ENCODE measurements at regions of chr4 and their contacts with region 1.

Region 1: DNA sequence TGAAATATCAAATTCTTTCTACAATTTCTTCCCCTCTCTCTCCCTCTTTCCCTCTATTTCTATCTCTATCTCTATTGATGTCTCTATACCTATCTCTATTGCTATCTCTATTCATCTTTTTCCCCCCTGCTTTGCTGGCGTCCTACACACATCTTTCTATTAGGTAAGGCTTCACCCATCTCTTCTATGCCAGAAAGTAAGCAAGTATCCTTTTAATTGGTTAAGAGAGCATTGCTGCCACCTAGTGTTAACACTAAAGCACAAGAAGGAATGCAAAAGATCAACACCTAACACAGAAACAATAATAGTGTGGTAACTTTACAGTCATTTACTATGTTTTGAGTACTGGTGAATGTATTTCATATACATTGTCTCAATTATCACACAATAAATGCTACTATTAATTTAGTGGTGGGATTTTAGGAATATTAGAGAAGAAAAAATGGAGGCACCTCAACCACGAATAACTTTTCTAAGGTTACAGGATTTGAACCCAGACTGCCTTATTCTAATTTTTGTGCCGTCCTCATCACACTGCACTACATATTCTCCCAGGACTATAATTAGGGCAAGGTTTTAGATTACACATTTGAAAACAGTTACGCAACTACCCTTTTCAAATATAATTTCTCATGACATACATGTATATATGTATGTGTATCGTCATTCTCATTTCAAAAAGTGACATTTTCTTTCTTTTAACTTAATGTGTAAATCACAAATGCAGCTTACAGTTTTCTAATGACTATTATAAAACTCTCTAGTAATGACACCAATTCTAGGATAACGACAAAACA is 3.7 kb upstream of the C4orf36 start:
- DNase-seq: peak; percentile 61
- ATAC-seq: peak; percentile 31
- H3K4me3 ChIP-seq: no peak overlapping the region
- H3K27ac ChIP-seq: no peak overlapping the region
- H3K4me1 ChIP-seq: peaks cover 6 to 32% of the 10 kb centered on the region in 2 experiments
- H3K27me3 ChIP-seq: no peaks in the 10 kb centered on the region
- CTCF ChIP-seq: peak; percentile 64 to 90 (median 87)
- POLR2A ChIP-seq: no peak
- RAD21 ChIP-seq: peak; percentile 96

Region 2: GRCh38 chr4:86223472-86223871 is 672.4 kb before region 1 on chr4:
- CTCF ChIA-PET with region 1: no interaction called
- POLR2A ChIA-PET with region 1: no interaction called
- RAD21 ChIA-PET with region 1: no interaction called
- intact Hi-C with region 1: loop called (anchors 2 kb)
- DNase-seq: peak; percentile 66
- ATAC-seq: peak; percentile 99
- H3K4me3 ChIP-seq: no peak overlapping the region
- H3K27ac ChIP-seq: no peak overlapping the region
- H3K4me1 ChIP-seq: no peaks in the 10 kb centered on the region
- H3K27me3 ChIP-seq: no peaks in the 10 kb centered on the region
- CTCF ChIP-seq: peak; percentile 71 to 82 (median 81)
- POLR2A ChIP-seq: no peak
- RAD21 ChIP-seq: peak; percentile 62

Region 3: GRCh38 chr4:86522349-86522748 is 373.5 kb before region 1 on chr4:
- CTCF ChIA-PET with region 1: interaction called, 8 read pairs
- POLR2A ChIA-PET with region 1: interaction called, 3 read pairs
- RAD21 ChIA-PET with region 1: interaction called, 3 read pairs
- intact Hi-C with region 1: loop called (anchors 1 kb)
- DNase-seq: no peak
- ATAC-seq: no peak
- H3K4me3 ChIP-seq: no peak overlapping the region
- H3K27ac ChIP-seq: no peak overlapping the region
- H3K4me1 ChIP-seq: no peaks in the 10 kb centered on the region
- H3K27me3 ChIP-seq: no peaks in the 10 kb centered on the region
- CTCF ChIP-seq: peak in 2 of 3 experiments; percentile 22 to 49; a peak in 2 of 6 replicates
- POLR2A ChIP-seq: no peak
- RAD21 ChIP-seq: peak; percentile 64

Region 4: DNA sequence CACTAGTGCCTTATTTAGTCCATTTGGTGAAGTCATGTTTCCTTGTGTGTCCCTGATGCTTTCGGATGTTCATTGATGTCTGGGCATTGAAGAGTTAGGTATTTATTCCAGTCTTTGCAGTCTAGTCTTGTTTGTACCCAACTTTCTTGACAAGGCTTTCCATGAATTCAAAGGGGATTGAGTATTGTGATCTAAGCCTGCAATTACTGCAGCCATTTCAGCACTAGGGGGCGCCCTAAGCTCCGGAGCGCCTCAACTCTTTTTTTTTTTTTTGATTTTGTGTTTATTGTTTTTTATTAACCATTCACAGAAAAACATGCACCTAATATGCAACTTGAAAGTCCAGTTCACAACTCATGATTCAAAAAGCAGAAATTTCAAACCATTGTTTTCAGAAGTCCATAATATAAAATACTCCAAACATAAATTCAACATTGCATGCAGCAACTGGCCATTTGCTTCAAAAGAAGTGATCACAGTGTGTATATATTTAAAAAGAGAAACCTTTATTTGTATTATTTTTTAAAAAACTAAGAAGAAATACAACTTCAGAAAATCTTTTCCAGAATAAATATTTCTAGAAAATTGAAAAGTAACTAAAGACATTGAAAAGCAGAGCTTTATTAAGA is 242.5 kb before region 1 on chr4:
- CTCF ChIA-PET with region 1: no interaction called
- POLR2A ChIA-PET with region 1: no interaction called
- RAD21 ChIA-PET with region 1: no interaction called
- intact Hi-C with region 1: loop called (anchors 5 kb)
- DNase-seq: peak; percentile 6
- ATAC-seq: no peak
- H3K4me3 ChIP-seq: no peak overlapping the region
- H3K27ac ChIP-seq: no peak overlapping the region
- H3K4me1 ChIP-seq: no peaks in the 10 kb centered on the region
- H3K27me3 ChIP-seq: no peaks in the 10 kb centered on the region
- CTCF ChIP-seq: peak; percentile 22 to 63 (median 54); a peak in 4 of 6 replicates
- POLR2A ChIP-seq: no peak
- RAD21 ChIP-seq: peak; percentile 36; the same call in 1 of the 2 replicates

Region 5: GRCh38 chr4:87220094-87220822 is 324.4 kb after region 1 on chr4 and contains the start of gene KLHL8:
- CTCF ChIA-PET with region 1: no interaction called
- POLR2A ChIA-PET with region 1: no interaction called
- RAD21 ChIA-PET with region 1: no interaction called
- intact Hi-C with region 1: no loop called
- DNase-seq: peak; percentile 49
- ATAC-seq: peak; percentile 96
- H3K4me3 ChIP-seq: peak within 1 kb of the TSS; percentile 98 to 99
- H3K27ac ChIP-seq: peak within 1 kb of the TSS; percentile 91
- H3K4me1 ChIP-seq: peaks cover 2 to 17% of the 10 kb centered on the region in 2 experiments; a peak in 3 of 4 replicates
- H3K27me3 ChIP-seq: no peaks in the 10 kb centered on the region
- CTCF ChIP-seq: 0 out of 6 replicates have a peak, but pooled peaks of 1 of the 3 experiments have one; percentile 2
- POLR2A ChIP-seq: peak; percentile 94
- RAD21 ChIP-seq: no peak
- total RNA-seq, gene KLHL8: 24.2 TPM

Region 6: DNA sequence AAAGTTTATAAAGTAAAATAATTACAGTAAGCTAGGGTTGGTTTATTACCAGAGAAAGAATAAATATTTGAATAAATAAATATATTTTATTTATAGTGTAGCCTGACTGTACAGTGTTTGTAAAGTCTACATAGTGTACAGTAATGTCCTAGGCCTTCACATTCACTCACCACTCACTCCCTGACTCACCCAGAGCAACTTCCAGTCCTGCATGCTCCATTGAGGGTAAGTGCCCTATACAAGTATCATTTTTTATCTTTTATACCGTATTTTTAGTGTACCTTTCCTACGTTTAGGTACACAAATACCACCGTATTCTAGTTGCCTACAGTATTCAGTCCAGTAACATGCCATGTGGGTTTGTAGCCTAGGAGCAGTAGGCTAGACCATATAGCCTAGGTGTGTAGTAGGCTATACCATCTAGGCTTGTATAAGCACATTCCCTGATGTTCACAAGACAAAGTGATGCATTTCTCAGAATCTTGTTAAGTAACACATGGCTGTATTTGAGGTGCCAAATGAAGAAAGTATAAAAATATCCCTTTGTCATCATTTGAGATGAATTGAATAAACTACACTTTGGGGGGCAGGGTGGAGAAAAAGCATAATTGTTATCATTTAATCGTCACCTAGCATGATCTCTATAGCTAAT is 339.3 kb after region 1 on chr4:
- CTCF ChIA-PET with region 1: no interaction called
- POLR2A ChIA-PET with region 1: no interaction called
- RAD21 ChIA-PET with region 1: no interaction called
- intact Hi-C with region 1: loop called (anchors 2 kb)
- DNase-seq: no peak
- ATAC-seq: peak; percentile 21; the same call in 1 of the 2 replicates
- H3K4me3 ChIP-seq: peak overlapping the region in 1 of 2 experiments; percentile 55; a peak in 1 of 4 replicates
- H3K27ac ChIP-seq: no peak overlapping the region
- H3K4me1 ChIP-seq: peaks cover 0 to 10% of the 10 kb centered on the region in 2 experiments; a peak in 2 of 4 replicates
- H3K27me3 ChIP-seq: no peaks in the 10 kb centered on the region
- CTCF ChIP-seq: no peak
- POLR2A ChIP-seq: no peak
- RAD21 ChIP-seq: no peak

Region 7: DNA sequence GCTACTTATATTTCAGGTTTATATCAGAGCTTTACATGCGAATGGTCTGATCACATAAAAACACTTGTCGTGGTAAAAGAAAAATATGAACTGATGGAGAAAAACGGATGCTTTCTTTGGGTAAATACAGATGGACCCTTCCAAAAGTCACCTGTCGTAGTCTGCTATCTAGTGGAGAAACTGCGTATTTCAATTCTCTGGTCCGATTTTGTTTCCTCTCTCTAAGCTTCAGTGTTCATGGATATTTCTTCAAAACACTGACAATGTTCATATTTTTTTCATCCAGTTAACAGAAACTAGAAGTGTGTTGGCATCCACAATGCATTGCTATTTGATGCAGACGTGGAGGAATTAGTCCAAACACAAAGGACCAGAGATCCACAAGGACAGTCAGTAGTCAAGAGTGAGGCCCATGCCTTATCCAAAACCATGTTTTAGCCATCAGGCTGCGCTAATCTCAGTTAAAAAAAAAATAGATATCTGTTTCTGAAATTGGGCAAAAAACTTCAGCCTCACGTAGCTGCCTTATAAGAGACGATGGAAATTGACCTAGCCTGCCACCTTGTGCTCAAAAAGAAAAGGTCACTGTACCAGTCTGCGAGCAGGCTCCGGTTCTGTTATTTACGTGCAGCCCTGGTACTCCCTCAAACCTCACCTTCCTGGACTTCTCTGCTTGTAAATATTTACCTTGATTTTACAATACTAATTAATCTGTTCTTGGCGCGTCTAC is 952.9 kb after region 1 on chr4:
- CTCF ChIA-PET with region 1: no interaction called
- POLR2A ChIA-PET with region 1: no interaction called
- RAD21 ChIA-PET with region 1: no interaction called
- intact Hi-C with region 1: loop called (anchors 5 kb)
- DNase-seq: peak; percentile 51
- ATAC-seq: peak; percentile 97
- H3K4me3 ChIP-seq: peak overlapping the region; percentile 30 to 48
- H3K27ac ChIP-seq: no peak overlapping the region
- H3K4me1 ChIP-seq: peaks cover 0 to 9% of the 10 kb centered on the region in 2 experiments; a peak in 3 of 4 replicates
- H3K27me3 ChIP-seq: no peaks in the 10 kb centered on the region
- CTCF ChIP-seq: peak; percentile 55 to 62 (median 58)
- POLR2A ChIP-seq: no peak
- RAD21 ChIP-seq: peak; percentile 55